MCF 10A (cell line): ENCODE measurements at regions of chr22 and their contacts with region 1.

Region 1: GRCh38 chr22:17638432-17639246 is at the start of gene BCL2L13:
- DNase-seq: peak; percentile 90
- H3K4me3 Mint-ChIP-seq: peak within 1 kb of the TSS; percentile 89
- H3K27ac Mint-ChIP-seq: peak within 1 kb of the TSS; percentile 100
- H3K4me1 Mint-ChIP-seq: peaks cover 14% of the 10 kb centered on the region
- H3K27me3 Mint-ChIP-seq: no peaks in the 10 kb centered on the region
- CTCF ChIP-seq: no peak
- total RNA-seq, gene BCL2L13: 53.6 and 75.1 TPM in 2 replicates

Region 2: GRCh38 chr22:17501679-17502285 is 136.9 kb before region 1 on chr22:
- CTCF ChIA-PET with region 1: no interaction called
- POLR2A ChIA-PET with region 1: no interaction called
- intact Hi-C with region 1: no loop called
- DNase-seq: peak; percentile 79
- H3K4me3 Mint-ChIP-seq: no peak overlapping the region
- H3K27ac Mint-ChIP-seq: no peak overlapping the region
- H3K4me1 Mint-ChIP-seq: peaks cover 13% of the 10 kb centered on the region
- H3K27me3 Mint-ChIP-seq: no peaks in the 10 kb centered on the region
- CTCF ChIP-seq: peak; percentile 76

Region 3: DNA sequence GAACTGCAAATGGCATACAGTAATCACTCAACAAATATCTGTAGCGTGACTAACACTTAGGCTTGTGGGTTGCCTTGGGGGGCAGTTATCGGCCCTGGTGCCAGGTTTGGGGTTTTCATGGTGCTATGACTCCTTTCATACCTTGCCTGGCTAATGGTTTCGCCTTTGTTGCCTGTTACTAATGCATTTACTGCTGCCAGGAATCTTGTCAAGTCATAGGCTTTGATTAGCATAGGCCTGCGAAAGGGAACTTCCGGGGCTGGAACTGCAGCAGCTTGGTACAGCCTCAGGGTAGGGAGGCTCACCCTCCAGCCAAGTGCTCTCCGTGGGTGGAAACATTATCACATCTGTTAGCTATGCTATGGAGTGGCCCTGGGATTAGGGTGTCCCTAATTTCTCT is 62.2 kb before region 1 on chr22:
- CTCF ChIA-PET with region 1: no interaction called
- POLR2A ChIA-PET with region 1: interaction called, 11 read pairs
- intact Hi-C with region 1: loop called (anchors 2 kb)
- DNase-seq: peak; percentile 99
- H3K4me3 Mint-ChIP-seq: peak overlapping the region; percentile 6
- H3K27ac Mint-ChIP-seq: peak overlapping the region; percentile 94
- H3K4me1 Mint-ChIP-seq: peaks cover 15% of the 10 kb centered on the region
- H3K27me3 Mint-ChIP-seq: no peaks in the 10 kb centered on the region
- CTCF ChIP-seq: no peak

Region 4: GRCh38 chr22:17628304-17629166 is 10.1 kb before region 1 on chr22 and contains the start of gene ATP6V1E1:
- CTCF ChIA-PET with region 1: no interaction called
- POLR2A ChIA-PET with region 1: interaction called, 70 read pairs
- intact Hi-C with region 1: no loop called
- DNase-seq: peak; percentile 97
- H3K4me3 Mint-ChIP-seq: peak within 1 kb of the TSS; percentile 98
- H3K27ac Mint-ChIP-seq: peak within 1 kb of the TSS; percentile 98
- H3K4me1 Mint-ChIP-seq: peaks cover 7% of the 10 kb centered on the region
- H3K27me3 Mint-ChIP-seq: no peaks in the 10 kb centered on the region
- CTCF ChIP-seq: no peak
- total RNA-seq, gene ATP6V1E1: 86.4 and 114 TPM in 2 replicates

Region 5: DNA sequence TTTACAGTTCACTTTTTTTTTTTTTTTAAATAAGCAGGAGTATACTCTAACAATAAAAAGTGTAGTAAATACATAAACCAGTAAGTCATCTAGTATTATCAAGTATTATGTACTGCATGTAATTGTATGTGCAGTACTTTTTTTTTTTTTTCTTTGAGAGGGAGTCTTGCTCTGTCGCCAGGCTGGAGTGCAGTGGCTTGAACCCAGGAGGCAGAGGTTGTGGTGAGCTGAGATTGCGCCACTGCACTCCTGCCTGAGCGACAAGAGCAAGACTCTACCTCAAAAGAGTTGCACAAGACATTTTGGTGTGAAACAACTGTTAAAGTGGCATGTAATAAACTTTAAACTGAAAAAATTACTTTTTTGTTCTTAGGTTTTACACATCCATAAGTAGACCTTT is 16.6 kb after region 1 on chr22:
- CTCF ChIA-PET with region 1: interaction called, 3 read pairs
- POLR2A ChIA-PET with region 1: interaction called, 10 read pairs
- intact Hi-C with region 1: no loop called
- DNase-seq: peak; percentile 46
- H3K4me3 Mint-ChIP-seq: no peak overlapping the region
- H3K27ac Mint-ChIP-seq: no peak overlapping the region
- H3K4me1 Mint-ChIP-seq: no peaks in the 10 kb centered on the region
- H3K27me3 Mint-ChIP-seq: no peaks in the 10 kb centered on the region
- CTCF ChIP-seq: no peak

Region 6: DNA sequence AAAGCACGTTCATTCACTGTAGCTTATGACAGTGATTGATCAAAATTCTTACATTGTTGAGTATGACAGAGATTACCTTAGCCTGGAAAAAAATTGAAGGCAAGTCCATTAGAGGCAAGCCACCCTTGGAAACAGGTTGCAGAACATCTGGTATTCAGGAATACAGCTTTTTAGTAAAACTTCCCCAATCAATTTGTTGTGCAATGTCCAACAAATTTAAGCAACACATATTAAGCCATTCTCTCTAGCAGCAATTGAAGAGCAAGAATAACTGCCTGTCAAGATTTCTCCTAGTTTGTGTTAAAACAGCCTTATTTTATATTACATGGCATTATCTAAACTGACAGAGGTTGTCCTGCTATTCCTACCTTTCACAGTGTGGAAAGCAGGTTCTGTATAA is 36.9 kb after region 1 on chr22:
- CTCF ChIA-PET with region 1: no interaction called
- POLR2A ChIA-PET with region 1: interaction called, 11 read pairs
- intact Hi-C with region 1: no loop called
- DNase-seq: no peak
- H3K4me3 Mint-ChIP-seq: no peak overlapping the region
- H3K27ac Mint-ChIP-seq: no peak overlapping the region
- H3K4me1 Mint-ChIP-seq: peaks cover 17% of the 10 kb centered on the region
- H3K27me3 Mint-ChIP-seq: no peaks in the 10 kb centered on the region
- CTCF ChIP-seq: no peak

Region 7: DNA sequence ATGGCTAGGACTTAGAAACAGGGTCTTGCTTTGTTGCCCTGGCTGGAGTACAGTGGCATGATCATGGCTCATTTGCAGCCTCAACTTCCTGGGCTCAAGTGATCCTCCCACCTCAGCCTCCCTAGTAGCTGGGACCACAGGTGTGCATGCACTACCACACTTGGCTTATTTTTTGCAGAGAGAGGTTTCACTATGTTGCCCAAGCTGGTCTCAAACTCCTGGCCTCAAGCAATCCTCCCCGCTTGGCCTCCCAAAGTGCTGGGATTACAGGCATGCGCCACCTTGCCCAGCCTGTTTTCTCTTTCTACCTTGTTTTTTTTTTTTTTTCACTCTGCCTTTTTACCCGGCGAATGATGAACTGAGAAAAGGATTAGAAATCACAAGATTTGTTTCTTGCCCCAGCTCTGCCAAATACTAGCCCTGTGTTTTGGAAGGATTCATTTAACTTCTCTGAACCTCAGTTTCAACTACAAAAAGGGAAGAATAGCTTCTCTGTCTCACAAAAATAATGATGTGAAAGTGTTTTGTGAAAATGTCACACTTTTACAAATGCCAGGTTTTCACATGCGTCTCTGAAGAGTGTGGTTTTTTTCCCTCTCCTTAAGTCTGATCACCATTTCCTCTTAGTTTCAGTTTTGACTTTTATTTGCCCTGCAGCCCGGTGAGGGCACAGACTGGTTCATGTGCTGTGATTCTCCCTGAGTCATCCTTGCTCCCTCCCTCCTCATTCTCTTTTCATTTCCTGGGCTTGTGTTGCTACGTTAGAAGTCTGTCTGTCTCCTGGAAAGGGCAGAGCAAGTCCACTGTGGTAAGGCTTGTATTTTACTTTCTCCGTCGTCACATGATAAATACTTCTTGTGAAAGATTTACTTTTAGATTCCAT is 67.6 kb after region 1 on chr22:
- CTCF ChIA-PET with region 1: no interaction called
- POLR2A ChIA-PET with region 1: interaction called, 35 read pairs
- intact Hi-C with region 1: no loop called
- DNase-seq: peak; percentile 92
- H3K4me3 Mint-ChIP-seq: peak overlapping the region; percentile 79
- H3K27ac Mint-ChIP-seq: peak overlapping the region; percentile 87
- H3K4me1 Mint-ChIP-seq: peaks cover 17% of the 10 kb centered on the region
- H3K27me3 Mint-ChIP-seq: no peaks in the 10 kb centered on the region
- CTCF ChIP-seq: no peak